Breast epithelium (tissue), 4 donors: ENCODE measurements at regions of chr20 and their contacts with region 1.

Region 1: GRCh38 chr20:54524778-54525177 is 49.4 kb downstream of the DOK5 start:
- DNase-seq: no peak
- H3K4me3 ChIP-seq: no peak overlapping the region
- H3K27ac ChIP-seq: no peak overlapping the region
- H3K4me1 ChIP-seq: no peaks in the 10 kb centered on the region
- H3K27me3 ChIP-seq: no peaks in the 10 kb centered on the region
- CTCF ChIP-seq: no peak
- POLR2A ChIP-seq: no peak

Region 2: DNA sequence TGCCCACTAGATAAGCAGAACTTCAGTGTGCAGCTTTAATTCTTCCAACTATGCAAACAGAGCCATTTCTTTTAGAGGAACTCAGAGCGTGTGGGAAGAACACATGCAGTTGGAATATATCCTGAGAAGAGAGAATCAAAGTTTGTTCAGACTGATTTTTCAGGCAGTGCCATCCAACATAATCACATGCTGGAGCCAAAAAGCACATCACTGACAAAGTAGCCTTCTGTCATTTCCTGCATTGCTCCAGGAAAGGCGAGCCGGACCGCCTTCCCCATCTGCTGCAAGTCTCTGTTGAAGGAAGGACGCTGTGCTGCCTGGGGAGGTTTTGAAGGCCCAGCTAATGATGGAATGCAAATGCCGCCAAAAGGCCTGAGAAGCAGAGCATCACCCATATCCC is 49.1 kb after region 1 on chr20:
- intact Hi-C with region 1: no loop called
- DNase-seq: no peak
- H3K4me3 ChIP-seq: no peak overlapping the region
- H3K27ac ChIP-seq: no peak overlapping the region
- H3K4me1 ChIP-seq: no peaks in the 10 kb centered on the region
- H3K27me3 ChIP-seq: no peaks in the 10 kb centered on the region
- CTCF ChIP-seq: no peak
- POLR2A ChIP-seq: no peak

Region 3: DNA sequence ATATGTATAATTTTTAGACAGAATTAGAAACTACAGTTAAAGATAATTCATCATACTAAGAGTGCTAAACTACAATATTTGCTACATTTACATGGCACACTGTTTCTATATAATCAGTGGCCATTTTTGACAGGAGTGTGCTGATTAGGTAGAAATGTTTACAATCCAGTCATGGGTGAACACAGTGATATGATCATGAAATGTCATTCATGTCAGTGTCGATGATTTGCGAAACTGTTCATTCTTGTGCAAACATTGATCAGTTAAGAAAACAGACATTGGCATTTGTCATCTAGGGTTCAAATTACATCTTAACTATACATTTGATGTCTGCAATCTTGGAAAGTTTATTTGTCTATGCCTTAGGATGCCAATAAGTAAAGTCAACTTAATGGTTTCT is 425.5 kb after region 1 on chr20:
- intact Hi-C with region 1: no loop called
- DNase-seq: no peak
- H3K4me3 ChIP-seq: no peak overlapping the region
- H3K27ac ChIP-seq: no peak overlapping the region
- H3K4me1 ChIP-seq: no peaks in the 10 kb centered on the region
- H3K27me3 ChIP-seq: no peaks in the 10 kb centered on the region
- CTCF ChIP-seq: no peak
- POLR2A ChIP-seq: no peak

Region 4: DNA sequence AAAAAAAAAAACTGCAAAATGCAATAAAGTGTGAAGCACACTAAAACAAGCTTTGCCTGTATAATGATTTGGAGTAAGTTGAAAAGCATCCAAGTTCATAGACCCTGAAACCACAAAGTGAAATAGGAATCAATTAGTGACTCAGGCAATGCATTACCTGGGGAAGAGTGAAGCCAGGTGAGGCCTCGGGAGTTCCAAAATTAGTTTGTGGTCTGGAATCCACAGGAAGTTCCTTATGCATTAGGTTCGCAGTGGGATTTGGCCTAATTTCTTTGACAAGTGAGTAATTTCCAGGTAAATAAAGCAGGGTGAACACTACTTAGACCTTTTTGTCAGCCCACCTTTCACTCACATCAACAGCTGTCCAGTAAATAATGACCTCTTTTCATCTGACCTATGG is 989.8 kb after region 1 on chr20:
- intact Hi-C with region 1: loop called (anchors 5 kb)
- DNase-seq: no peak
- H3K4me3 ChIP-seq: no peak overlapping the region
- H3K27ac ChIP-seq: no peak overlapping the region
- H3K4me1 ChIP-seq: no peaks in the 10 kb centered on the region
- H3K27me3 ChIP-seq: no peaks in the 10 kb centered on the region
- CTCF ChIP-seq: no peak
- POLR2A ChIP-seq: no peak